ENCODE measurements at regions of chr20 and their contacts with region 1.

Region 1: GRCh38 chr20:45771182-45771759 is 20.4 kb downstream of the WFDC3 start:
- DNase-seq: peak; percentile 62 to 77
- ATAC-seq: peak; percentile 77 to 88
- H3K4me3 ChIP-seq: no peak overlapping the region
- H3K27ac ChIP-seq: no peak overlapping the region; a peak in 1 of 6 replicates
- H3K4me1 ChIP-seq: peaks cover 4% of the 10 kb centered on the region; the same call in 2 of the 3 replicates
- CTCF ChIP-seq: peak; percentile 98
- EP300 ChIP-seq: no peak
- POLR2A ChIP-seq: no peak
- RAD21 ChIP-seq: peak; percentile 96 to 97

Region 2: DNA sequence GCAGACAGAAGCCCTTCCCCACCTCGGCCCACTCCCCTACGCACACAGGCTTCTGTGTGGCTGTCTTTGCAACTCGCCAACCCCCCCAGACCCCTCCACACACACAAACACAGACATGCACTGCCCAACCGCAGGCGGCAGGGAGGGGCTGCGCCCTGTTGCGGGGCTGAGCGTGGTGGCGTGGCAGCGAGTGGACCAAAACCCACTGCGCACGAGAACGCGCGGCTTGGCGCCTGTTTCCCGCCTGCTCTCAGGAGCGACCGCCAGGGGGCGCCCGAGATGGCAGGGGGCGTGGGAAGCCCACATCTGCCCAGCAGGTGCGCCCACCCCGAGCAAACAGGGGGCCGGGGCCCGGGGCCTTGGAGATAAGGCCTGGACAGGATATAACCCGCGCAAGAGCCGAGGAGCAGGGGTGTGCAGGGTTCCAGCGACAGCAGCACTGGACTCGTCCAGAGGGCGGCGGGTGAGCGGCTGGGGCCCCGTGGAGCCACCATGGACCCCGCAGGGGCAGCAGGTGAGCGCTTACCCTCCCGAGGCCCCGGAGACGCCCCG is 464.8 kb before region 1 on chr20 and contains the start of gene RBPJL:
- CTCF ChIA-PET with region 1: interaction called, 25 read pairs
- POLR2A ChIA-PET with region 1: no interaction called
- DNase-seq: no peak
- ATAC-seq: peak in 1 of 2 experiments; percentile 79; a peak in 3 of 6 replicates
- H3K4me3 ChIP-seq: no peak within 1 kb of the TSS
- H3K27ac ChIP-seq: no peak within 1 kb of the TSS
- H3K4me1 ChIP-seq: no peaks in the 10 kb centered on the region
- CTCF ChIP-seq: peak; percentile 79
- EP300 ChIP-seq: no peak
- POLR2A ChIP-seq: no peak
- RAD21 ChIP-seq: peak in 1 of 2 experiments; percentile 42; a peak in 3 of 5 replicates
- polyA plus RNA-seq, gene RBPJL: not detected in 2 replicates

Region 3: GRCh38 chr20:45362804-45363610 is 408.3 kb before region 1 on chr20 and contains the start of gene SYS1:
- CTCF ChIA-PET with region 1: interaction called, 48 read pairs
- POLR2A ChIA-PET with region 1: interaction called, 5 read pairs
- DNase-seq: peak; percentile 95 to 98
- ATAC-seq: peak; percentile 94 to 95
- H3K4me3 ChIP-seq: peak within 1 kb of the TSS; percentile 64
- H3K27ac ChIP-seq: peak within 1 kb of the TSS; percentile 95 to 97
- H3K4me1 ChIP-seq: peaks cover 27% of the 10 kb centered on the region; the same call in 2 of the 3 replicates
- CTCF ChIP-seq: peak; percentile 92
- EP300 ChIP-seq: no peak
- POLR2A ChIP-seq: peak; percentile 69
- RAD21 ChIP-seq: peak; percentile 85 to 87
- polyA plus RNA-seq, gene SYS1: 27.6 and 30.5 TPM in 2 replicates

Region 4: GRCh38 chr20:45450097-45450818 is 321.0 kb before region 1 on chr20:
- CTCF ChIA-PET with region 1: interaction called, 18 read pairs
- POLR2A ChIA-PET with region 1: no interaction called
- DNase-seq: peak; percentile 28 to 56
- ATAC-seq: peak in 1 of 2 experiments; percentile 56; a peak in 3 of 6 replicates
- H3K4me3 ChIP-seq: no peak overlapping the region
- H3K27ac ChIP-seq: no peak overlapping the region
- H3K4me1 ChIP-seq: no peaks in the 10 kb centered on the region
- CTCF ChIP-seq: peak; percentile 62
- EP300 ChIP-seq: no peak
- POLR2A ChIP-seq: no peak
- RAD21 ChIP-seq: peak; percentile 37 to 51

Region 5: DNA sequence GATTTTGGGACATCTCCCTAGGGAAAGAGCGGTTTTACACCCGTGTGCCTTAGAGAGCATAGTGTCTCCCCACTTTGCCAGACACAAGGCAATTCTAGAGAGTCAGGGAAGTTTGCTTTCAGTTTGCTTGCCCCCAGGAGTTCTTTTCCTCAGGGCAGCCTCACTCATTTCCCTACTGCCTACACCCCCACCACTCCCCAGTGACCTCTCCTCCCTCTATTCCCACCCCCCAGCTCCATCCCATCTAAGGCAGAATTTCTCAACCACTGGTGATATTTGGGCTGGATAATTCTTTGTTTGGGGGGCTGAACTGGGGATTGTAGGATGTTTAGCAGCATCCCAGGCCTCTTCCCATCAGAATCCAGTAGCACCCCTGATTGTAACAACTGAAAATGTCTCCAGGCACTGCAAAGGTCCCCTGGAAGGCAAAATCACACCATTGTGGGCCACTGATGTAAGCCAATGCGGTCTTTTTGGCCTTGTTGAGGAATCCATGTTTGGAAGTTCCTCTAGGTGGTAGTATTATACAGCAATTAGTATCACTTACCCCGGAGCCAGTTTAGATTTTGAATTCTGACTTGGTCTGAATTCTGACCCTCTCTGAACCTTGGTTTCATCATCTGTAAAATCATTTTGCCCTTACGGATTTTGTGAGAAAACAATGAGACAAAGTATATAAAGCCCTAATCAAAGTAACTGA is 225.4 kb before region 1 on chr20:
- CTCF ChIA-PET with region 1: interaction called, 28 read pairs
- POLR2A ChIA-PET with region 1: no interaction called
- DNase-seq: peak; percentile 21 to 26
- ATAC-seq: peak; percentile 69 to 83; a peak in 5 of 6 replicates
- H3K4me3 ChIP-seq: no peak overlapping the region
- H3K27ac ChIP-seq: no peak overlapping the region
- H3K4me1 ChIP-seq: no peaks in the 10 kb centered on the region
- CTCF ChIP-seq: peak; percentile 38; the same call in 2 of the 3 replicates
- EP300 ChIP-seq: no peak
- POLR2A ChIP-seq: no peak
- RAD21 ChIP-seq: peak; percentile 62 to 69

Region 6: GRCh38 chr20:45745015-45745414 is 26.3 kb before region 1 on chr20:
- CTCF ChIA-PET with region 1: interaction called, 18 read pairs
- POLR2A ChIA-PET with region 1: no interaction called
- DNase-seq: no peak
- ATAC-seq: no peak
- H3K4me3 ChIP-seq: no peak overlapping the region
- H3K27ac ChIP-seq: no peak overlapping the region
- H3K4me1 ChIP-seq: no peaks in the 10 kb centered on the region
- CTCF ChIP-seq: no peak
- EP300 ChIP-seq: no peak
- POLR2A ChIP-seq: no peak
- RAD21 ChIP-seq: no peak

Region 7: DNA sequence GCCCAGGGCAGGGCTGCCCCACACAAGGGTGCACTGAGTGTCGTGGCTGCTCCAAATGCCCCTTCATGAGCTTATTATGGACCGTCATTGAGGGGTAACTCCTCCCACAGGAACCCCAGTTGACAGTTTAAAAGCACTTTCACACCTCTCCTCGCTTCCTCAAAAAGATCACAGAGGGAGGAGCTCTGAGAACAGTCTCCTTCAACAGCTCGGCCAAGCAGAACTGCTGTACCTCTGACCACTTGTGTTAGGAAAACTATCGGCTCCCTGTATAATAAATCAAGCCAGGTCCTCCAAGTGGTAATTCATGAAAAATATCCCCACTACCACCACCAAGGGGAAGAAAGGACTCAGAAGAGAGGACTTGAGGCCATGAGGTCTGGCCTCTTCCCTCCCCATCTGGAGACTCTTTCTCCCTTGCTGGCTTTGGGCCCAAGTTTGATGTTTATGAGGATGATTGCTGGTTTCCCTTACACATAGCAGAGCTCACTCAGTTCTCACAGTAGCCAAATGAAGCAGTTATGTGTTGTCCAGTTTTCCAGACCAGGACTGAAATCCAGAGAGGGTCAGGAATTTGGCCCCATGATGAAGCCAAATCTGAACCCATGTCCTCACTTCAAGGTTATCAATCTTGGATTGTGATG is 71.0 kb after region 1 on chr20:
- CTCF ChIA-PET with region 1: no interaction called
- POLR2A ChIA-PET with region 1: no interaction called
- DNase-seq: no peak
- ATAC-seq: no peak
- H3K4me3 ChIP-seq: no peak overlapping the region
- H3K27ac ChIP-seq: no peak overlapping the region
- H3K4me1 ChIP-seq: no peaks in the 10 kb centered on the region
- CTCF ChIP-seq: no peak
- EP300 ChIP-seq: no peak
- POLR2A ChIP-seq: no peak
- RAD21 ChIP-seq: no peak

Measured in A549 (cell line).